ENCODE measurements at regions of chr9 and their contacts with region 1.

Region 1: GRCh38 chr9:21334701-21335632 is at the start of gene KLHL9:
- DNase-seq: peak; percentile 97
- H3K4me3 ChIP-seq: peak within 1 kb of the TSS; percentile 58 to 95 (median 84)
- H3K27ac ChIP-seq: peak within 1 kb of the TSS; percentile 88 to 95 (median 91)
- H3K4me1 ChIP-seq: peaks cover 0 to 46% (median 43%) of the 10 kb centered on the region in 4 donors
- H3K27me3 ChIP-seq: no peaks in the 10 kb centered on the region
- CTCF ChIP-seq: no peak
- EP300 ChIP-seq: no peak
- POLR2A ChIP-seq: peak; percentile 20 to 30
- total RNA-seq, gene KLHL9: 17.2 to 26.4 (median 22.0) TPM

Region 2: GRCh38 chr9:21314152-21314551 is 20.8 kb before region 1 on chr9:
- intact Hi-C with region 1: loop called (anchors 1 kb)
- DNase-seq: no peak
- H3K4me3 ChIP-seq: no peak overlapping the region
- H3K27ac ChIP-seq: no peak overlapping the region
- H3K4me1 ChIP-seq: peaks cover 0 to 5% (median 0%) of the 10 kb centered on the region in 4 donors
- H3K27me3 ChIP-seq: no peaks in the 10 kb centered on the region
- CTCF ChIP-seq: no peak
- EP300 ChIP-seq: no peak
- POLR2A ChIP-seq: no peak

Region 3: DNA sequence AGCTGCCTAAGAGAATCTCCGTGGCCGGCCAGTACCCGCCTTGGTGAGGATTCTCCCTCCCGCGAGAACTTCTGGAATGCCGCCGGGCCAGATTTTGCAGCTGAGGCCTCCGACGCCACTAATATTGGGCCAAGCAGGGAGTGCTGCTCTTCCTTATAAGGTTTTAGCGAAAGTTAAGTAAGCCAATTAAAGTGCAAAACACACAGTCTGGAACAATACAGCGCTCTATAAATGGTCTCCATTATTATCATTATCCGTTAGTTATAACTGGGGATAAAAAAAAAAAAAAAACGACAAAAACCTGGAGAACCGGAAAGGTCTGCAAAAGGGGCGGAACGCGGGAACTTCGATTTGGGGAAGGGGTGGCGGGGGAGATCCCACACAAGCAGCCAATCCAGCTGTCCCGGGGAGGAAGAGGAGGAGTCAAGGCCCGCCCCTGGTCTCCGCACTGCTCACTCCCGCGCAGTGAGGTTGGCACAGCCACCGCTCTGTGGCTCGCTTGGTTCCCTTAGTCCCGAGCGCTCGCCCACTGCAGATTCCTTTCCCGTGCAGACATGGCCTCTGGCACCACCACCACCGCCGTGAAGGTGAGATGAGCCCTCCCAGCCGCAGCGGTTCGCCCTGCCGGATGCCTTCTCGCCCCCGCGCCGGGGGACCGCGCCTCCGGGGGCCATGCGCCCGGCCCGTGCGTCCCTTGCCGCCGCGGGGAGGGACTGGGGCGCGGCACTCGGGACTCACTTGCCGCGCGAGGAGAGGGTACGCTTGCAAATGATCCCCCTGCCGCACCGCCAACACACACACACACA is 467.4 kb after region 1 on chr9 and contains the start of gene MTAP:
- intact Hi-C with region 1: loop called (anchors 5 kb)
- DNase-seq: peak; percentile 97
- H3K4me3 ChIP-seq: peak within 1 kb of the TSS; percentile 58 to 88 (median 78)
- H3K27ac ChIP-seq: peak within 1 kb of the TSS; percentile 91 to 94 (median 93)
- H3K4me1 ChIP-seq: peaks cover 0 to 48% (median 33%) of the 10 kb centered on the region in 4 donors
- H3K27me3 ChIP-seq: no peaks in the 10 kb centered on the region
- CTCF ChIP-seq: no peak
- EP300 ChIP-seq: peak in 1 of 4 donors; percentile 46
- POLR2A ChIP-seq: peak; percentile 74 to 81
- total RNA-seq, gene MTAP: 19.9 to 28.5 (median 23.7) TPM

Measured in sigmoid colon (tissue), 7 donors.